Heart right ventricle (tissue), 16 donors: ENCODE measurements at regions of chr9 and their contacts with region 1.

Region 1: DNA sequence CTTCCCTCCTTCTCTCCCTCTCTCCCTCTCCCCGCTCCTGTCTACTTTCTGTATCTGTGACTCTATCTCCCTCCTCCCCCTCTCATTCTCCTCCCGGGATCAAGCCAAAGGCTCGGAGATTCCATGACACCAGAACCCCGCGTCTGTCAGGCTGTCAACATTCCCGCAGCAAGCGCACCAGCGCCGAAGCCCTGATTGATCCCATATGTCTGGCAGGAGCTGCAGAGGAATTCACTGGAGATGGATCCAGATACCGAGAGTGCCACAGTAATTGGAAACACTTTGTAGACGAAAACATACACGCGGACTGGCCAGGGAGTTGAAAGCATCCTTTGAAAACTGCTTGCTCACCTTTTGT is 300 bp upstream of the SVEP1 start:
- DNase-seq: peak; percentile 12 to 27
- ATAC-seq: peak in 5 of 8 donors; percentile 15 to 32 (median 18)
- H3K4me3 ChIP-seq: peak overlapping the region; percentile 33 to 64 (median 58)
- H3K27ac ChIP-seq: peak overlapping the region; percentile 20 to 89 (median 80)
- H3K4me1 ChIP-seq: peaks cover 0 to 18% (median 6%) of the 10 kb centered on the region in 9 donors
- H3K27me3 ChIP-seq: peaks cover 0 to 70% (median 41%) of the 10 kb centered on the region in 7 donors
- CTCF ChIP-seq: no peak

Region 2: DNA sequence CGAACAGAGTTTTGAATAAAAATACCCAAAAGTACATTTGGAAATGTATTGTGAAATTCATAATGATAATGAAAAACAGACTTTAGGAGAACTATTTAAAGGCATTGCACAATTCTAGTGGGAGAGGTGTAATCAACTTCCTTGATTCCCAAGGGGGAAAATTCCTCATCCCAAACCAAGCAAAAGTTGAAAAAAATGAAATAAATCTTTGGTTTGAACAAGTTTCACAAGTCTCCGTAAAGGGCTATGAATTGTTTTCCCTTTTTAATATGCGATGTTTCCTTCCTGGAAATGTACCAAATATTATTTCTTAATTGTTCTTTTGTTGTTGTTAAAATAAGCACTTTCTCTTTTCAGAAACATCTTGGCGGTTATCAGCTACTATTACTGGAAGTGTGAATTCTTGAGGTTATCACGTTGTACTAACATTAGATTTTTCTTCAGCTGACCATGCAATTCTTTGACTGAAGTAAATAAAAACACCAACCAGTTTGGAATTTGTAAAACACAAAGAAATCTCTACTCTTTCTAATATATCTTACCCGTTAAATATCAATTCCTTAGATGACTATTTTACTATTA is 59.6 kb before region 1 on chr9:
- intact Hi-C with region 1: loop called in 1 of 10 experiments (anchors 10 kb)
- DNase-seq: no peak
- ATAC-seq: peak in 5 of 8 donors; percentile 46 to 72 (median 61)
- H3K4me3 ChIP-seq: no peak overlapping the region
- H3K27ac ChIP-seq: peak overlapping the region in 3 of 10 donors; percentile 4 to 20 (median 6)
- H3K4me1 ChIP-seq: peaks cover 0 to 21% (median 0%) of the 10 kb centered on the region in 9 donors
- H3K27me3 ChIP-seq: no peaks in the 10 kb centered on the region
- CTCF ChIP-seq: no peak

Region 3: DNA sequence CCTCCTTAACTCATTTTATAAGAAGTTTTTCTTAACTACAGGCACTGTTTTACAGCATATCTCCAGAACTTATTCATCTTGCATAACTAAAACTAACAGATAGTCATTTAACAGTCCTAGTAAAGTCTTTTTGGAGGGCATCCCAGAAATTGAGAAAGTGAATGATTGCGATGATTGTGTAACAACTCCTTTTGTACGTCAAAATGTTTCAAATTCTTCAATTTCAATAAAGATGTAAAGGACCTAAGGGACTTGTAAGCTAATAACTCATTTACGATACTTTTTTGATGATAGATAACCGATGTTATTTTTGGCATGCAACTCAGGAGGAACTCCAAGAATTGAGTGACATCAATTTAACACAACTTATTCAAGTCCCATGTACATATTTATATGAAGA is 43.0 kb before region 1 on chr9:
- intact Hi-C with region 1: no loop called
- DNase-seq: no peak
- ATAC-seq: peak in 4 of 8 donors; percentile 37 to 61 (median 42)
- H3K4me3 ChIP-seq: no peak overlapping the region
- H3K27ac ChIP-seq: peak overlapping the region in 5 of 10 donors; percentile 4 to 54 (median 30)
- H3K4me1 ChIP-seq: peaks cover 0 to 11% (median 5%) of the 10 kb centered on the region in 9 donors
- H3K27me3 ChIP-seq: no peaks in the 10 kb centered on the region
- CTCF ChIP-seq: no peak